ENCODE measurements at regions of chr1 and their contacts with region 1.

Region 1: DNA sequence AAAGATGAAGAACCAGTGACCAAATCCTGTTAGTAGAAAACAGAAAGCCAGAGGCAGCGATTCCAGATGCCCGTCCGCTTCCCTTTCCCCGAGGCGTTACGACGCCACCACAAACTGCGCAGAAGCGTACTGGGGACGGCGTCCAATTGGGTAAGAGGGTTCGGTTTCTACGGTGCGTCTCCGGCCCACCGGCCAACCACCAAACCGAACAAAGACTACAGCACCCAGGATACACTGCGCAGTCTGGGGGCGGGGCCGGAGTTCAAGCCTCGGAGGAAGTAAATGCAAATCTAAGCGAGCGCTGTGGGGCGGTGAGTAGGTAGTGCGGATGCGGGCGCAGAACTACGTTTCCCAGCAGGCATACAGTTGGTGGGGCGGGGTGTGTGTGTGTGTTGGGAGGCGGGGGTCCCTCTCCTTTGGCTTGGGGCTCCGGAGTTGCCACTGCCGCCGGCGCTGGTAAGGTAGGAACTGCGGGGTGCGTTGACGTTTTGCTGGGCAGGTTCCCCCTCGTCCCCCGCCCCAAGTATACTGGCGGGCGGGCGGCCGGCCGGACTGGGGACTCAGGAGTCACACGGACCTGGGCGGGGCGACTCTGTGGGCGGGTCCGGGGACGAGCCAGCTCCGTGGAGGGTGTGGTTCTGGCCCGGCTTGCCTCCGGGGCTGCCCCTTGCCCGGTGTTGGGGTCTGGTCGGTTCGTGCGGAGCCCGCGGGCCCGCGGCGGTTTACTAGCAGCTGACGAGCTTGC is at the starts of genes SWT1 and TRMT1L:
- DNase-seq: peak; percentile 99
- H3K4me3 ChIP-seq: peak within 1 kb of the TSS; percentile 70 to 95 (median 84)
- H3K27ac ChIP-seq: peak within 1 kb of the TSS; percentile 97 to 100 (median 98)
- H3K4me1 ChIP-seq: peaks cover 6 to 29% (median 18%) of the 10 kb centered on the region in 4 donors
- H3K27me3 ChIP-seq: no peaks in the 10 kb centered on the region
- CTCF ChIP-seq: peak in 1 of 5 experiments; percentile 18
- EP300 ChIP-seq: no peak
- POLR2A ChIP-seq: peak; percentile 99
- total RNA-seq, gene SWT1: 2.8 to 12.3 (median 10.1) TPM
- total RNA-seq, gene TRMT1L: 18.3 to 67.7 (median 20.9) TPM

Region 2: DNA sequence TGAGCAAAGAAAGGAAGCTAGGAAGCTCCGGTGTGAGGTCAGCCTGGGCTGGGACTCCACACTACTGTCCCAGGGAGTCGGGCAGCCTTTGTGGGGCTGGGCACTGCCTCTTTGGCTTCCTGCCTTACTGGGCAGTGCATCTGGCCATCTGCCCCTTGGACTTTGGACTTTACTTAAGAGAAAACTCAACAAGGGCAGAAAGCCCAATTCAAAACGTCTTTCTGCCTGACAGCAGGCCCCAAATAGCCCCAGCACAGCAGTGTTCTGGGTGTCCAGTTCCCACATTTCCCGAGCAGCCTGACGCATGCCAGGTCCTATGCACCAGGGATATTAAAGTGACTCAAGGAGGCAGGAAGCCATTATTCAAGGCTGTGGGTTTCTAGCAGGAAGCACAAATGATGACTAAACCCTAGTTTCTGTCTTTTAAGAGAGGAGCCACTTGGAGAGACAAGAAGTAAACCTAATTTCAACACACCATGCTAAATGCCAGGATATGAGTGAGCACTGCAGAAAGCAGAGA is 364.5 kb before region 1 on chr1:
- in situ Hi-C with region 1: loop called in 1 of 4 experiments (anchors 25 kb)
- intact Hi-C with region 1: no loop called
- DNase-seq: peak; percentile 74
- H3K4me3 ChIP-seq: no peak overlapping the region
- H3K27ac ChIP-seq: peak overlapping the region; percentile 58 to 79 (median 76)
- H3K4me1 ChIP-seq: peaks cover 16 to 39% (median 27%) of the 10 kb centered on the region in 4 donors
- H3K27me3 ChIP-seq: no peaks in the 10 kb centered on the region
- CTCF ChIP-seq: no peak
- EP300 ChIP-seq: no peak
- POLR2A ChIP-seq: peak; percentile 27

Region 3: DNA sequence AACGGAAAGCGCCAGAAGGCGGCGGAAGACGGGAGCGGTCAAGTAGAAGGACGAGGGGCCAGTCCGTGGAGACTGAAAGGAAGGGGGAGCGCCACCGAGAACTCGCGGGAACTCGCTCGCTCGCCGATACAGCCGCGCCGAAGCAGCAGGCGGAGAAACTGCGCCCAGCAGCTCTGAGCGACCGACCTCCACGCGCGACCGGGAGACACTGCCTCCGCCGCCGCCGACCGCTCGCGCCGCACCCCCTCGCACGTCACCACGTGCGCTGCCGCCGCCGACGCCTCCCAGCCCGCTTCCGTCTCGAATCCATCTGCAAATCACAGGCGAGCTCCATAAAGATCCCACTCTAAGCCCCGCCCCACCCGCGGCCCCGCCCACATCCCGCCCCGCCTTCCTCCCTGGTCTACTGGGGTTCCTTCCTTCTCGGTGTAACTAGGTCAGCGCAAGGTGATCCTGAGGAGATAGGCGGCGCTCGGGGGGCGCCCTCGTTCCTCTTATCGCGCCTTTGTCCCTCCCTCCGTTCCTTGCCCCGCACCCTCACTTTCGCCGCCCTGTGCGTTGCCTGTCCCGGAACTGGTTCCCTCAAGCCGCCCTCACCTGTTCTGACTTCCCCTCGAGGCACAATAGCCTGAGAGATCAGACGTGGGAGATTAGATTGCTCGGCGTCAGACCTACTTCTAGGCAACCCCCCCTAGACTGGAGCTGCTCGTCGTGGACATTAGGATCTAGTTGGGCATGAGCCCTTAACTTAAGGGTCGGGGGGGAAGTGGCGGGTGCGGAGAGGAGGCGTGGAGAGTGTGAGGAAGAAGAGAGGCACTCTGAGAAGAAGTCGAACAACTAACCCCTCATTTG is 160.2 kb after region 1 on chr1 and contains the start of gene IVNS1ABP:
- in situ Hi-C with region 1: loop called in 1 of 4 experiments (anchors 10 kb)
- intact Hi-C with region 1: no loop called
- DNase-seq: peak; percentile 96
- H3K4me3 ChIP-seq: peak within 1 kb of the TSS; percentile 80 to 93 (median 86)
- H3K27ac ChIP-seq: peak within 1 kb of the TSS; percentile 94 to 99 (median 98)
- H3K4me1 ChIP-seq: peaks cover 4 to 47% (median 41%) of the 10 kb centered on the region in 4 donors
- H3K27me3 ChIP-seq: no peaks in the 10 kb centered on the region
- CTCF ChIP-seq: peak in 3 of 5 experiments; percentile 17 to 29 (median 26)
- EP300 ChIP-seq: no peak
- POLR2A ChIP-seq: peak; percentile 99
- total RNA-seq, gene IVNS1ABP: 50.5 to 174 (median 133) TPM

Measured in transverse colon (tissue), 4 donors.